IMR-90 (cell line): ENCODE measurements at regions of chr15 and their contacts with region 1.

Region 1: DNA sequence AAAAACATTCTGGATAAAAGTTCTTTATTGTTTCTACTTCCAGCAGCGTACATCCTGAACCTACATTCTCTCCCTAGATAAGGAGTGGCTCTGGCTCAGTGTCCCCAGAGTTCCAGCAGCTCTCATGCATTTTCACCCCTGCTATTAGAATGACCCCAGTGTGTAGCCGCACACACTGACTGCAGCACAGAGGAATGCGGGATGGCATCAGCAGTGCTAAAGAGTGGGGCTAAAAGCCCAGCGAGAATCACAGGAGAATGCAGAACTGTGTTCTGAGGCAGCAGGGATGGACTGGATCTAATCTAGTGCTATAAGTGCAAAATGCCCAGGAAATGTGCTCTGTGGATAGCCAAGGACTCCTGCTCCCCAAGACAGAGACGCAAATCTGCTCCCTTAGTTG is 66.4 kb upstream of the TJP1 start:
- DNase-seq: peak; percentile 77
- ATAC-seq: peak; percentile 93
- H3K4me3 ChIP-seq: no peak overlapping the region
- H3K27ac ChIP-seq: peak overlapping the region; percentile 32; the same call in 1 of the 2 replicates
- H3K4me1 ChIP-seq: peaks cover 17% of the 10 kb centered on the region
- H3K27me3 ChIP-seq: no peaks in the 10 kb centered on the region
- CTCF ChIP-seq: no peak
- POLR2A ChIP-seq: no peak
- RAD21 ChIP-seq: no peak

Region 2: GRCh38 chr15:29821416-29822131 is 67.1 kb before region 1 on chr15:
- CTCF ChIA-PET with region 1: interaction called, 3 read pairs
- POLR2A ChIA-PET with region 1: no interaction called
- dilution Hi-C with region 1: no loop called
- in situ Hi-C with region 1: no loop called
- intact Hi-C with region 1: loop called (anchors 2 kb)
- DNase-seq: peak; percentile 85
- ATAC-seq: peak; percentile 47
- H3K4me3 ChIP-seq: peak overlapping the region; percentile 95
- H3K27ac ChIP-seq: peak overlapping the region; percentile 99
- H3K4me1 ChIP-seq: peaks cover 4% of the 10 kb centered on the region
- H3K27me3 ChIP-seq: no peaks in the 10 kb centered on the region
- CTCF ChIP-seq: peak; percentile 41
- POLR2A ChIP-seq: no peak; the same call in 1 of the 2 replicates
- RAD21 ChIP-seq: peak; percentile 50

Region 3: GRCh38 chr15:29870495-29871151 is 18.0 kb before region 1 on chr15:
- CTCF ChIA-PET with region 1: interaction called, 3 read pairs
- POLR2A ChIA-PET with region 1: interaction called, 13 read pairs
- dilution Hi-C with region 1: no loop called
- in situ Hi-C with region 1: no loop called
- intact Hi-C with region 1: loop called (anchors 2 kb)
- DNase-seq: no peak
- ATAC-seq: no peak
- H3K4me3 ChIP-seq: no peak overlapping the region
- H3K27ac ChIP-seq: no peak overlapping the region
- H3K4me1 ChIP-seq: no peaks in the 10 kb centered on the region
- H3K27me3 ChIP-seq: no peaks in the 10 kb centered on the region; the same call in 1 of the 2 replicates
- CTCF ChIP-seq: no peak
- POLR2A ChIP-seq: no peak
- RAD21 ChIP-seq: no peak

Region 4: GRCh38 chr15:29942143-29942542 is 53.5 kb after region 1 on chr15:
- CTCF ChIA-PET with region 1: no interaction called
- POLR2A ChIA-PET with region 1: no interaction called
- dilution Hi-C with region 1: no loop called
- in situ Hi-C with region 1: loop called (anchors 10 kb)
- intact Hi-C with region 1: no loop called
- DNase-seq: no peak
- ATAC-seq: no peak
- H3K4me3 ChIP-seq: no peak overlapping the region
- H3K27ac ChIP-seq: no peak overlapping the region
- H3K4me1 ChIP-seq: peaks cover 9% of the 10 kb centered on the region
- H3K27me3 ChIP-seq: no peaks in the 10 kb centered on the region
- CTCF ChIP-seq: 0 out of 2 replicates have a peak, but pooled peaks have one; percentile 23
- POLR2A ChIP-seq: no peak
- RAD21 ChIP-seq: no peak

Region 5: DNA sequence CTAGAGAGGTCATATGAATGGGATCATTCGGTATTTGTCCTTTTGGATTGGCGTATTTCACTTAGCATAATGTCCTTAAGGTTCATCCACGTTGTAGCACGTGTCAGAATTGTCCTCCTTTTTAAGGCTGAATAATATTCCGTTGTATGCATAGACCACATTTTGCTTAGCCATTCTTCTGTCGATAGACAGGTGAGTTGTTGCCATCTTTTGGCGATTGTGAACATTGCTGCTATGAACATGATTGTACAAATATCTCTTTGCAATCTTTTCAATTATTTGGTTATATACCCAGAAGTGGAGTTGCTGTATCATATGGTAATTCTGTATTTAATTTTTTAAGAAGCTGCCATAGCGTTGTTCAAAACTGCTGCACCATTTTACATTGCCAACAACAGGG is 141.7 kb after region 1 on chr15:
- CTCF ChIA-PET with region 1: no interaction called
- POLR2A ChIA-PET with region 1: no interaction called
- dilution Hi-C with region 1: no loop called
- in situ Hi-C with region 1: no loop called
- intact Hi-C with region 1: no loop called
- DNase-seq: no peak
- ATAC-seq: no peak
- H3K4me3 ChIP-seq: no peak overlapping the region
- H3K27ac ChIP-seq: no peak overlapping the region
- H3K4me1 ChIP-seq: no peaks in the 10 kb centered on the region
- H3K27me3 ChIP-seq: peaks cover 10% of the 10 kb centered on the region
- CTCF ChIP-seq: 0 out of 2 replicates have a peak, but pooled peaks have one; percentile 13
- POLR2A ChIP-seq: no peak
- RAD21 ChIP-seq: peak; percentile 21; the same call in 1 of the 2 replicates